SK-N-SH (cell line): ENCODE measurements at regions of chr6 and their contacts with region 1.

Region 1: GRCh38 chr6:116100419-116101301 is at the start of gene NT5DC1:
- DNase-seq: peak; percentile 95
- H3K4me3 ChIP-seq: peak within 1 kb of the TSS; percentile 71 to 95
- H3K27ac ChIP-seq: peak within 1 kb of the TSS; percentile 79 to 92
- H3K4me1 ChIP-seq: peaks cover under 1 to 16% of the 10 kb centered on the region in 2 experiments; a peak in 3 of 4 replicates
- H3K27me3 ChIP-seq: no peaks in the 10 kb centered on the region
- CTCF ChIP-seq: peak; percentile 43
- EP300 ChIP-seq: no peak
- RAD21 ChIP-seq: no peak; the same call in 1 of the 2 replicates
- polyA plus RNA-seq, gene NT5DC1: 20.3 and 21.0 TPM in 2 replicates

Region 2: DNA sequence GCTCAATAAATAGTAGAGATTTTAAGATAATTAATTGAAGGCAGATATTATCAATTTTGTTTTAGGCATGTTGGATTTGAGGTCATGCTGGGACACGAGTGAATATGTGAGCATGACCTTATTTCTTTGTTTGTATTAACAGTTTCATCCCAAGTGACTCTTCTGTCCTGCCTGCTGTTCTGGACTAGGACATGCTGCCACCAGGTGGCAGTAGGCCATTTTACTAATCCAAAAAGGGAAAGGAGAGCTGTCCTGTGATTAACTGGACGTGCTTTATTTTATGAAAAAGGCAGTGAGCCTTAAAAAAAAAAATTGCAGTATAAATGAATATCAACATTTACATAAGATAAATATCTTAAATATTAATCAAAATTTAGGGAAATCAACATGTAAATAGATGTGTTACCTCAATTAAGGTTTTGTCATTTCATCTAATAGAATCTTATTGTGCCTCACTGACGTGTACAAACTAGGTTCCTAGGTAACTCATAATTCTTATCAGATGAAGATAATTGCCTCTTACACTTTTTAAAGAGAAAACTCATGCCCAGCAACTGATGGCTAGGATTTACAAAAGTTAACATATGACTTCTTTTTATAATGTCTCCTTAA is 89.8 kb before region 1 on chr6:
- CTCF ChIA-PET with region 1: interaction called, 15 read pairs
- POLR2A ChIA-PET with region 1: no interaction called
- DNase-seq: peak; percentile 40
- H3K4me3 ChIP-seq: no peak overlapping the region
- H3K27ac ChIP-seq: no peak overlapping the region
- H3K4me1 ChIP-seq: peaks cover 0 to 3% of the 10 kb centered on the region in 2 experiments; a peak in 1 of 4 replicates
- H3K27me3 ChIP-seq: no peaks in the 10 kb centered on the region
- CTCF ChIP-seq: peak; percentile 90
- EP300 ChIP-seq: no peak
- RAD21 ChIP-seq: peak; percentile 77

Region 3: DNA sequence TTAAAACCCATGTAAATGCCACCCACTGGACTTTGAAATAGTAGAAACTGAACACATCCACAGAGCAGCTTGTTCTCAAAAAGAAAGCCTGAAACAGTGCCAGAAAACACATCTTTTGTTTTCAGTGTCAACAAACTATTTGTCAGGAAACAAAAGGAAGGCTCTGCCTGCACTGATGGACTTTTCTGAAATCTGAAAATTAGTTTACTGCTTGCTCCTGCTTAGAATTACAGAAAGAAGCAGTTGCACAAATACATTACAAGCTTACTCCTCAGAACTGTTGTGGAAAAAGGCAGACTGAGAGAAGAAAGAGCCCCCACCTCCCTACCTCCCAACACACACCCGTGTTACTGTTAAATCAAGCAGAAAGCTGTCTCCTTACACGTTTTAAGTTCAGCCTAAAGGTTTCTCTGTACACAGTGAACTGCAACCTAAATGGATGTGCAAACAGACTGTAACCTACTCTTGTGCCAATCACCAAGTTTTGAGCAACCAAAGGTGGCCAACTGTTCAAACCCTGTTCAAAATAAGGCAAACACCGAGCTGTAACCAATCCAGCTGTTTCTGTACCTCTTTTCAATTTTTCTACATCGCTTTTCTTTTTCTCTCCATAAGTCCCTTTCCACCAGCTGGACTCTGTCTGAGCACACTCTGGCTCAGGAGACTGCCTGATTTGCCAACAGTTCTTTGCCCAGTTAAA is 83.7 kb before region 1 on chr6:
- CTCF ChIA-PET with region 1: interaction called, 15 read pairs
- POLR2A ChIA-PET with region 1: no interaction called
- DNase-seq: no peak
- H3K4me3 ChIP-seq: no peak overlapping the region
- H3K27ac ChIP-seq: no peak overlapping the region
- H3K4me1 ChIP-seq: no peaks in the 10 kb centered on the region; a peak in 2 of 4 replicates
- H3K27me3 ChIP-seq: no peaks in the 10 kb centered on the region
- CTCF ChIP-seq: no peak
- EP300 ChIP-seq: no peak
- RAD21 ChIP-seq: no peak

Region 4: GRCh38 chr6:116111552-116112528 is 11.2 kb after region 1 on chr6:
- CTCF ChIA-PET with region 1: interaction called, 16 read pairs
- POLR2A ChIA-PET with region 1: interaction called, 6 read pairs
- DNase-seq: peak; percentile 26
- H3K4me3 ChIP-seq: no peak overlapping the region; a peak in 1 of 4 replicates
- H3K27ac ChIP-seq: no peak overlapping the region
- H3K4me1 ChIP-seq: peaks cover 1 to 5% of the 10 kb centered on the region in 2 experiments; a peak in 2 of 4 replicates
- H3K27me3 ChIP-seq: no peaks in the 10 kb centered on the region
- CTCF ChIP-seq: peak; percentile 66
- EP300 ChIP-seq: no peak
- RAD21 ChIP-seq: peak; percentile 48

Region 5: GRCh38 chr6:116268589-116269293 is 168.1 kb after region 1 on chr6:
- CTCF ChIA-PET with region 1: no interaction called
- POLR2A ChIA-PET with region 1: no interaction called
- DNase-seq: peak; percentile 76
- H3K4me3 ChIP-seq: no peak overlapping the region; a peak in 1 of 4 replicates
- H3K27ac ChIP-seq: peak overlapping the region; percentile 42 to 63; a peak in 3 of 4 replicates
- H3K4me1 ChIP-seq: peaks cover 5 to 12% of the 10 kb centered on the region in 2 experiments; a peak in 3 of 4 replicates
- H3K27me3 ChIP-seq: no peaks in the 10 kb centered on the region
- CTCF ChIP-seq: peak; percentile 95
- EP300 ChIP-seq: peak in 1 of 2 experiments; percentile 20; a peak in 1 of 4 replicates
- RAD21 ChIP-seq: peak; percentile 84